Endothelial cell of umbilical vein (primary cell): ENCODE measurements at regions of chr6 and their contacts with region 1.

Region 1: GRCh38 chr6:132084833-132085509 is 133.8 kb upstream of the CCN2 start:
- DNase-seq: peak; percentile 95
- H3K4me3 ChIP-seq: peak overlapping the region in 1 of 3 experiments; percentile 15
- H3K27ac ChIP-seq: peak overlapping the region; percentile 99
- H3K4me1 ChIP-seq: peaks cover 56% of the 10 kb centered on the region
- H3K27me3 ChIP-seq: no peaks in the 10 kb centered on the region
- CTCF ChIP-seq: no peak
- POLR2A ChIP-seq: peak; percentile 57

Region 2: GRCh38 chr6:131740161-131740560 is 344.8 kb before region 1 on chr6:
- CTCF ChIA-PET with region 1: no interaction called
- POLR2A ChIA-PET with region 1: no interaction called
- dilution Hi-C with region 1: no loop called
- intact Hi-C with region 1: no loop called
- DNase-seq: no peak
- H3K4me3 ChIP-seq: no peak overlapping the region
- H3K27ac ChIP-seq: no peak overlapping the region
- H3K4me1 ChIP-seq: peaks cover 4% of the 10 kb centered on the region
- H3K27me3 ChIP-seq: no peaks in the 10 kb centered on the region
- CTCF ChIP-seq: no peak
- POLR2A ChIP-seq: no peak

Region 3: DNA sequence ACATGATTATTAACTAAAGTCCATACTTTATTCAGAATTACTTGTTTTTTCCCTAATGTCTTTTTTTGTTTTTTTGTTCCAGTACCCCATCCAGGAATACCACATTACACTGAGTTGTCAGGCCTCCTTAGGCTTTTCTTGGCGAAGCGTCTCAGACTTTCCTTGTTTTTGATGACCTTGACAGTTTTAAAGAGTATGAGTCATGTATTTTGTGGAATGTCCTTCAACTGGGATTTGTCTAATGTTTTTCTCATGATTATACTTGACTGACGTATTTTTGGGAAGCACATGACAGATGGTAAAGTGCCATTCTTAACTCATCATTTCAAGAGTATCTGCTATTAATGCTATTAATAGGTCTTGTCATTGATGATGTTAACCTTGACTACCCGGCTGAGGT is 253.6 kb before region 1 on chr6:
- CTCF ChIA-PET with region 1: no interaction called
- POLR2A ChIA-PET with region 1: no interaction called
- dilution Hi-C with region 1: no loop called
- intact Hi-C with region 1: no loop called
- DNase-seq: peak; percentile 46
- H3K4me3 ChIP-seq: no peak overlapping the region
- H3K27ac ChIP-seq: no peak overlapping the region
- H3K4me1 ChIP-seq: no peaks in the 10 kb centered on the region
- H3K27me3 ChIP-seq: peaks cover 0 to 2% of the 10 kb centered on the region in 2 experiments
- CTCF ChIP-seq: no peak
- POLR2A ChIP-seq: no peak

Region 4: GRCh38 chr6:131909408-131910218 is 175.4 kb before region 1 on chr6:
- CTCF ChIA-PET with region 1: no interaction called
- POLR2A ChIA-PET with region 1: no interaction called
- dilution Hi-C with region 1: no loop called
- intact Hi-C with region 1: no loop called
- DNase-seq: peak; percentile 74
- H3K4me3 ChIP-seq: no peak overlapping the region
- H3K27ac ChIP-seq: no peak overlapping the region
- H3K4me1 ChIP-seq: no peaks in the 10 kb centered on the region
- H3K27me3 ChIP-seq: peaks cover 0 to 7% of the 10 kb centered on the region in 2 experiments
- CTCF ChIP-seq: peak; percentile 63 to 69
- POLR2A ChIP-seq: no peak

Region 5: GRCh38 chr6:131949909-131950766 is 134.8 kb before region 1 on chr6:
- CTCF ChIA-PET with region 1: interaction called, 10 read pairs
- POLR2A ChIA-PET with region 1: interaction called, 135 read pairs
- dilution Hi-C with region 1: no loop called
- intact Hi-C with region 1: loop called (anchors 1 kb)
- DNase-seq: peak; percentile 55
- H3K4me3 ChIP-seq: peak overlapping the region; percentile 10 to 93 (median 88)
- H3K27ac ChIP-seq: peak overlapping the region; percentile 69
- H3K4me1 ChIP-seq: peaks cover 35% of the 10 kb centered on the region
- H3K27me3 ChIP-seq: no peaks in the 10 kb centered on the region
- CTCF ChIP-seq: peak; percentile 5 to 37
- POLR2A ChIP-seq: peak; percentile 94

Region 6: GRCh38 chr6:132063738-132064137 is 21.2 kb before region 1 on chr6:
- CTCF ChIA-PET with region 1: interaction called, 11 read pairs
- POLR2A ChIA-PET with region 1: interaction called, 7 read pairs
- dilution Hi-C with region 1: no loop called
- intact Hi-C with region 1: loop called (anchors 1 kb)
- DNase-seq: peak; percentile 98
- H3K4me3 ChIP-seq: no peak overlapping the region
- H3K27ac ChIP-seq: peak overlapping the region; percentile 99
- H3K4me1 ChIP-seq: peaks cover 72% of the 10 kb centered on the region
- H3K27me3 ChIP-seq: no peaks in the 10 kb centered on the region
- CTCF ChIP-seq: no peak
- POLR2A ChIP-seq: no peak

Region 7: GRCh38 chr6:132115714-132116366 is 30.9 kb after region 1 on chr6:
- CTCF ChIA-PET with region 1: interaction called, 10 read pairs
- POLR2A ChIA-PET with region 1: no interaction called
- dilution Hi-C with region 1: no loop called
- intact Hi-C with region 1: no loop called
- DNase-seq: peak; percentile 54
- H3K4me3 ChIP-seq: peak overlapping the region in 2 of 3 experiments; percentile 45 to 61
- H3K27ac ChIP-seq: peak overlapping the region; percentile 4
- H3K4me1 ChIP-seq: peaks cover 12% of the 10 kb centered on the region
- H3K27me3 ChIP-seq: no peaks in the 10 kb centered on the region
- CTCF ChIP-seq: no peak
- POLR2A ChIP-seq: no peak

Region 8: DNA sequence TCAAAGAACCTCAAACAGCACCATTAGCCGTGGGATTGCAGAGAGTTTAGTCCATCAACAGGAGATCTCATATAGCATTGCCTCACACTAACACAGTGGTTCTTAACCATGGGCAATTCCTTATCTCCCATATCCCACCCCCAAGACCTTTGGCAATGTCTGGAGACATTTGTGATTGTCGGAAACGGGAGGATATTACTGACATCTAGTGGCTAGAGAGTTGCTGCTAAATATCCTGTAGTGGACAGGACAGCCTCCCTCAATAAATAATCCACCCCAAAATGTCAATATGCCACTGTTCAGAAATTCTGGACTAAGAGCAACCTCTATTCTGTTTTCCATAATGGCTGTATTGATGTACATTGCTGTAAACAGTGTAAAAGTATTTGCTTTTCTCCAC is 76.3 kb after region 1 on chr6:
- CTCF ChIA-PET with region 1: no interaction called
- POLR2A ChIA-PET with region 1: interaction called, 4 read pairs
- dilution Hi-C with region 1: no loop called
- intact Hi-C with region 1: loop called (anchors 1 kb)
- DNase-seq: peak; percentile 70
- H3K4me3 ChIP-seq: no peak overlapping the region
- H3K27ac ChIP-seq: peak overlapping the region; percentile 5
- H3K4me1 ChIP-seq: peaks cover 7% of the 10 kb centered on the region
- H3K27me3 ChIP-seq: no peaks in the 10 kb centered on the region
- CTCF ChIP-seq: peak; percentile 34 to 41
- POLR2A ChIP-seq: no peak